Activated CD8-positive, alpha-beta memory T cell treated with anti-CD3 and anti-CD28 coated beads, Interleukin-2, amount 10 ng/mL, durations not matched to agents 7 days and 5 days (primary cell): ENCODE measurements at regions of chr12 and their contacts with region 1.

Region 1: GRCh38 chr12:123580772-123581171 is 3.6 kb upstream of the TMED2 start:
- DNase-seq: no peak
- ATAC-seq: no peak
- H3K4me3 Mint-ChIP-seq: no peak overlapping the region
- H3K27ac Mint-ChIP-seq: no peak overlapping the region
- H3K4me1 Mint-ChIP-seq: peaks cover 16% of the 10 kb centered on the region
- H3K27me3 Mint-ChIP-seq: no peaks in the 10 kb centered on the region

Region 2: DNA sequence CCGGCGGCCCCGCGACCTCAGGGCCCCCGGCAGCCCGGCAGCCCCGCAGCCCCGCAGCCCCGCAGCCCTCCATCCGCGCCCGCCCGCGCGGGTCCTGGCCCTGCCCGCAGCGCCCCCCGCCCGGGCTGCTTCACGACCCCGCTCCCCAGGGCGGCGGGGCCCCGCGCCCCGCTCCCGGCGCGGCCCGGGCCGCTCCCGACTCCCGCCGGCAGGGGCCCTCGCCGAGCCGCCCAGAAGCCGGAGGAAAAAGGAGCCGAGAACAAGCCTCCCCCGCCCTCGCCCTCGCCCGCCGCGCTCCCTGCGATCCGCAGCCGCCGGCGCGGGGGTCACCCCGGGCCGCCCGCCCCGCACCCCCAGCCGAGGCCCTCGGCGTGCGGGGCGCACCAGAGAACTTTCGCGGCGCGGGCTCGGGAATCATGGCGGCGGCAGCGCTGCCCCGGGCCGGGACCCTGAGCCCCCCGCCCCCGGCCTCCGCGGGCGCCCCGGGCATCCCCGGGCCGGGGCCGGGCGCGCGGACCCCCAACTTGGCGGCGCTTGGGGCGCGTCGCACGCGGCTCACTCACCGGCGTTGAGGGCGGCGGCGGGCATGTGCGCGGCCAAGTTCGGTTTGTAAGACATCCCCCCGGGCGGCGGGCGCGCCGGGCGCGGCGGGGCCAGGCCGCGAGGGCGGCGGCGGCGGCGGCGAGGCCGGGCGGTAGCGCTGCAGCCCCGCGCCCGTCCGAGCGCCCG is 309.6 kb before region 1 on chr12:
- CTCF ChIA-PET with region 1: interaction called, 15 read pairs
- DNase-seq: peak; percentile 84
- ATAC-seq: peak; percentile 86
- H3K4me3 Mint-ChIP-seq: peak overlapping the region; percentile 78
- H3K27ac Mint-ChIP-seq: no peak overlapping the region
- H3K4me1 Mint-ChIP-seq: peaks cover 18% of the 10 kb centered on the region
- H3K27me3 Mint-ChIP-seq: no peaks in the 10 kb centered on the region

Region 3: DNA sequence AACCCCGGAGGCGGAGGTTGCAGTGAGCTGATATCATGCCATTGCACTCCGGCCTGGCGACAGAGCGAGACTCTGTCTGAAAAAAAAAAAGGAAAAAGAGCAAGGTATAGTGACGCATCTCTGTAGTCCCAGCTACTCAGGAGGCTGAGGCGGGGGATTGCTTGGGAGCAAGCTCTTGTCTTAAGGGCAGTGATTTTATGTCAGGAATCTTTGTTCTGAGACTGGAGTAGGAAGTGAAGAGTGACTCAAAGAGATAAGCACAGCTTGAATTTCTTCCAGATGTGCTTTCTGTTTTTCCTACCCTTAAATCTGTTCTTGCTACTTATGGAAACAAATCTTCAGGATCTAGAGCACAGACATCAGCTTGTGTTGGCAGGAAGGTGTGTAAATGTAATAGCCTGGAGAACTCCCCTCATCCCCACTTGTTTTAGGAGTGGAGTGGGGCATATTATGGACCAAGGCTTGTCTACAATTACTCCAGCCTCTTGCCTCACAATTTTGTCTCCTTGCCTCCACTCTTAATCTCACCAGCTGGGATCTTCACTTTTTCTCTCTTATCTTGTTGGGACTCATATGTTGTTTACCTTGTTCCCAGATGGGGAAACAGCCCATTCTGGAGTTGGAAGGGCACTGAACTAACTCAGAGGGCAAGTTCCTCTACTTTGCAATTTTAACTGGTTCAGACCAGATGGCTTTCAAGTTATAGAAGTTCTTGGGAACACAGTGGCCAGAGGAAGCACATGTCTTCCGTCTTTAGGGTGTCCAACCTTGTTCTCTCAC is 11.1 kb after region 1 on chr12:
- CTCF ChIA-PET with region 1: interaction called, 11 read pairs
- DNase-seq: no peak
- ATAC-seq: no peak
- H3K4me3 Mint-ChIP-seq: no peak overlapping the region
- H3K27ac Mint-ChIP-seq: peak overlapping the region; percentile 38
- H3K4me1 Mint-ChIP-seq: peaks cover 43% of the 10 kb centered on the region
- H3K27me3 Mint-ChIP-seq: no peaks in the 10 kb centered on the region